Posterior vena cava (tissue), 2 donors: ENCODE measurements at regions of chr5 and their contacts with region 1.

Region 1: GRCh38 chr5:54703133-54703532 is 185.6 kb downstream of the SNX18 start:
- DNase-seq: peak; percentile 90

Region 2: DNA sequence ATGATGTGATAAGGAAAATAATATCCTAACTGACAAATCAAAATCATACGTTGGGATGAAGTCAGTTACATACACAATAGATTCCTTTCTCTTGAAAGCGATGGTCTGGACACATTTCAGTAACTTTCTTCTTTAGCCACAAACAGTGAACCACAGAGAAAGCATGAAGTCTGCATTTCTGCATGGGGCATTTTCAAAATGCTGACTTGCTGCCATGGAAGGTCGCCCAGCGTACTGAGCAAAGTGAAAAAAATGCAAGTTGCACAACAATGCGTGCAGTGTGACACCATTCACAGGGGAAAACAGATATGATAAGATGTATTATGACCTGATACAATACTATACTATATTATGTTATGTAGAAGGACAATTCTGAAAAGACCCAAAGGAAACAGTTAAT is 39.3 kb before region 1 on chr5:
- intact Hi-C with region 1: loop called in 1 of 2 experiments (anchors 5 kb)
- DNase-seq: peak; percentile 85

Region 3: DNA sequence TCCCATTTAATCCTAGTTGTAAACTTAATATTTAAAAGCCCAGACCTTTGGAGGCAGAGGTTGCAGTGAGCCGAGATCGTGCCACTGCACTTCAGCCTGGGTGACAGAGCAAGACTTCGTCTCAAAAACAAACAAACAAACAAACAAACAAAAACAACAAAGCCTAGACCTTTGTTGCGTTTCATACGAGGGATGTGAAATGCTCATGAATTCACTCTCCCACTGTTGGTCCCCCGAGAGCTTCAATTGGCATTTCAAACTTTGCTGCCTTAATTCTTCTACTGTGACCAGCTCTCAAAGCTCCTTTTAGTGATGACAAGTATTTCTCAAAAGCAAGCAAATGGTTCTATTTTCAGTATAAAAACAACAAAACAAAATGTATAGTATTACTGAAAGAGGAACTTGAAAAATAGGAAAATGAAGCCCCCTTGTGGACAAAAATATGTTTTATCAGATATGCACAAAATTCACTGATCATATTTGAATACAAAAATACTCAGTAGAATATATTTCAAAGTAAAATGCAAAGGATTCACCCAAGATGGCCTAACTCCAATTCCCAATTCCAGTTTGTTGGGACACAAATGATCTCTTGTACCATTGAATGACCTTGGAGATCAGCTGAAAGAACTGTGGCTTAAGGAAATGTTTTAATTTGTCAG is 141.9 kb after region 1 on chr5:
- intact Hi-C with region 1: loop called in 1 of 2 experiments (anchors 10 kb)
- DNase-seq: no peak

Region 4: DNA sequence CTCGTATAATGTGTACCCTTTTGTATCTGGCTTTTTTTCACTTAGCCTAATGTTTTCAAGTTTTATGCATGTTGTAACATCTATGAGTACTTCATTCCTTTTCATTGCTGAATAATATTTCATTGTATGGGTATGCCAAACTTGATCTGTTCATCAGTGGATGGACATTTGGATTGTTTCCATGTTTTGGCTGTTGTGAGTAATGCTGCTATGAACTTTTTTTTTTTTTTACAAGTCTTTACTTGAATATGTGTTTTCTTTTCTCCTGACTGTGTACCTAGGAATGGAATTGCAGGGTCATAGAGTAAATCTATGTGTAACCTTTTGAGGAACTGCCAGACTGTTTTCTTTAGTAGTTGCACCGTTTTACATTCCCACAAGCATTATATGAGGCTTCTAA is 657.1 kb after region 1 on chr5:
- intact Hi-C with region 1: no loop called
- DNase-seq: no peak